Left colon (tissue), 2 donors: ENCODE measurements at regions of chr7 and their contacts with region 1.

Region 1: DNA sequence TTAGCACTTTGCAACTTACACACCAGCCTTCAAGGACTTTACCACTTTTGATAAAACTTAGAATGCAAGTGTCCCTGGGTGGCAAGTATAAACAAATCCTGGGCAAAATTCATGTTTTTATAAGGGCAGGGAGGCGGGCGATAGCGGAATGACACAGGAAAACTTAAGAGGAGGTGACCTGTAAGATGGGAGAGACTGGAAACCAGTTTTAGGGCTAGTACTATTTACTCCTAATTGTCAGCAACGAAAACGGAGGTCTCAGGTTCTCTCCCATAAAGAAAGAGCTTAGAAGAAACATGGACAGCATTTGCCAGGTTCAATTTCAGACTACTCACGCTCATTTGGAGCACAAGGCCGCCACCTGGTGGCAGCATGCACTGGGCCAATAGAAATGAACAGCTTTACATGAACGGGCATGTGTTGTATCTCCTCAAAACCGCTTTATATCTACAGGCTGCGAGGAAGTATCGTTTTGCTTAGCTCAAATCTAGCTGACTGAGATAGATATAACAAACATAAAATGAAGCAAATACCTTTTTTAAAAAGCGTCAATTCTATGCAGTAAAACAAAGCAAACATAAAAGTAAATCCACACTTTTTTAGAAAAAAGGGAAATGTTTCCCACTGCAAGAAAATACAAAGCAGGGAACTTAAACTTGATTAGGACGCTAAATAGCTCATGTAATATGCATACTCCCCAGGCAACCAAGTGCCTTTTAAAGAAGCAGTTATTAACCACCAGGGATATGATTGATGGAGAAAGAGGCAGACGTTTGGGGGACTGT is 37.6 kb upstream of the SVOPL start:
- DNase-seq: peak; percentile 47 to 90
- ATAC-seq: peak; percentile 91

Region 2: GRCh38 chr7:138161600-138162081 is 577.1 kb before region 1 on chr7:
- intact Hi-C with region 1: loop called in 1 of 2 experiments (anchors 10 kb)
- DNase-seq: peak; percentile 82 to 83
- ATAC-seq: peak; percentile 97